Activated CD8-positive, alpha-beta T cell treated with anti-CD3 and anti-CD28 coated beads for 36 hours (primary cell): ENCODE measurements at regions of chr4 and their contacts with region 1.

Region 1: DNA sequence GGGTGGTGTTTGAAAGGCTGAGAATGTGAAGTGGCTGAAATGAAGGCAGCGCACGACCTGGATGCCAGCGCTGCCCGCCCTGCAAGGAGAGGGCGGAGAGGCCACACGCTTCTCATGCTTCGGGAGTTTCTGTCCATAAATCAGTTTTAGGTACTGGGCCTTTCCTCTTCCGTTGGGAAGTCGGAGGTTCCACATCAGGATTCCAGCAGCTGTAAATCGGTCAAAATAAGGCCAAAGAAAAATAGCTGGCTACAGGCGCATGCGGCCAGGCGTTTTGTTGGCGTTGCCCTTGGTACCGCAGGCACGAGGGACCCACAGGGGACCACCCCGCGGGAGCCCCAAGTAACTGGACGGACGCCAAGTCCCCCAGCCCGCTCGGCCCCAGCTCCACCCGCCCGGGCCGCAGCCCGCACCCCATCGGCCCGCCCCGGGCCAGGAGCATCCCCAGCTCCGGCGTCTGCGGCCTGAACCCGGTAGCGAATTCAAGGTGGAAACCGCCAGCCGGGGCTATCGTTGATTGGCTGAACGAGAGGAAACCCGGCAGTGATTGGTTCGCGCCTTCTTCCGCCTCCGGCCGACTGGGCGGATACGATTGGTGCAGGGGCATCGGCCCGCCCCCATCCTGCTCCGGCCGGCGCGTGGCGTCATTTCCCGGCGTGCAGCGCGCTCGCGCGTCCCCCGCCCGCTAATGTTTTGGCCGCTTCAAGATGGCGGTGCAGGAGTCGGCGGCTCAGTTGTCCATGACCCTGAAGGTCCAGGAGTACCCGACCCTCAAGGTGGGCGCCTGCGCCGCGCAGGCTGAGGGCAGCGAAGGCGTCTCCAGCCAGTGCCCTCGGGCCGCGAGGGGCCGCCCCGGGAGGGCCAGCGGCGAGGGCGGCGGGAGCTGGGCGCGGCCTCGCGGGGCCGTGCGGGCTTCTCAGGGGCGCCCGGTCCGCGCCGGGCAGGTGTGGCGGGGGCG is at the start of gene MAEA:
- DNase-seq: peak; percentile 98
- ATAC-seq: peak; percentile 98
- H3K4me3 Mint-ChIP-seq: peak within 1 kb of the TSS; percentile 91
- H3K27ac Mint-ChIP-seq: peak within 1 kb of the TSS; percentile 89
- H3K4me1 Mint-ChIP-seq: peaks cover 29% of the 10 kb centered on the region
- H3K27me3 Mint-ChIP-seq: no peaks in the 10 kb centered on the region
- CTCF ChIP-seq: no peak
- total RNA-seq, gene MAEA: 32.3 to 37.0 TPM

Region 2: GRCh38 chr4:1021386-1022050 is 268.0 kb before region 1 on chr4:
- CTCF ChIA-PET with region 1: no interaction called
- POLR2A ChIA-PET with region 1: no interaction called
- intact Hi-C with region 1: no loop called
- DNase-seq: no peak
- ATAC-seq: no peak
- H3K4me3 Mint-ChIP-seq: no peak overlapping the region
- H3K27ac Mint-ChIP-seq: no peak overlapping the region
- H3K4me1 Mint-ChIP-seq: peaks cover 6% of the 10 kb centered on the region
- H3K27me3 Mint-ChIP-seq: no peaks in the 10 kb centered on the region
- CTCF ChIP-seq: no peak

Region 3: DNA sequence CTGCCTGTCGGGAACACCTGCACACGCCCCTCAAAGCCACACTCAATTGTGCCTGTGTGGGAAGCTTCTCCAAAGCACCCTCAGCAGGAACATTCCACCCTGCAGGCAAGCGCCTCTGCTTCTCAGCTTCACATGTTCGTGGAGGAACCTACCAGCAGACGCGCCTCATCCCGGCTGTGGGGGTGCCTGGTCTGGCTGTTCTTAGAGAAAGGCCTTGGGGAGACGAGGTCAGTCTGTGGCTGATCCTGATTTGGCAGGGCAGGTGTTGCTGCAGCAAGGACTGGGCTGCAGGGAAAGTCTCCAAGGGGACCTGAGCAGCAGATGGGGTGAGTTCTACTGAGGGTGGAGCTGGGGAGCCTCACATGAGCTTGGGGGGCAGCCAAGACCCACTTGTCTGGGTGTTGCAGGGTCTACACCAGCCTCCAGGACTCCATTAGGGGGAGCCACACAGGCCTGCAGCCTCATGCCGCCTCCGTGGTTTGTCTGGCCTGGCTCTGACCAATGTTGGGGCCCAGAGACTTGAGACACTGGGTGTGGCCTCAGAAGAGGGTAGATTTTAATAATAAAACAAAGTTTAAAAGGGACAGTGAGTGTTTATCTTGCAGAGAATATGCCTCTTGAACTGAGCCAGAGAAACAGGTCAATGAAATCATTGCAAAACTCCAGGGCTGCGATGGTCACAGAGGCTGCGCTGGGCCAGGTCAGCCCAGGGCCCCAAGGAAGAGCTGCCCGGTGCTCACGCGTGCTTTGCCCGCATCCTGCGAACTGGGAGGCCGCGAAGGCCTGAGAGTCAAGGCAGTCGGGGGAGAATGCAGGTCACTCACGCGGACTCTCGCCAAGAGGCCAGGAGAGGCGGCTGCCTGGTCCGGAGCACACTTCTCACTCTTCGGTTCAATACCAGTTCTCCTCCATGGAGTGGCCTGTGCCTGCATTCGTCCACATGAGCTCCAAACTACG is 197.2 kb before region 1 on chr4:
- CTCF ChIA-PET with region 1: no interaction called
- POLR2A ChIA-PET with region 1: no interaction called
- intact Hi-C with region 1: no loop called
- DNase-seq: no peak
- ATAC-seq: no peak
- H3K4me3 Mint-ChIP-seq: no peak overlapping the region
- H3K27ac Mint-ChIP-seq: no peak overlapping the region
- H3K4me1 Mint-ChIP-seq: peaks cover 3% of the 10 kb centered on the region
- H3K27me3 Mint-ChIP-seq: peaks cover 2% of the 10 kb centered on the region
- CTCF ChIP-seq: no peak

Region 4: DNA sequence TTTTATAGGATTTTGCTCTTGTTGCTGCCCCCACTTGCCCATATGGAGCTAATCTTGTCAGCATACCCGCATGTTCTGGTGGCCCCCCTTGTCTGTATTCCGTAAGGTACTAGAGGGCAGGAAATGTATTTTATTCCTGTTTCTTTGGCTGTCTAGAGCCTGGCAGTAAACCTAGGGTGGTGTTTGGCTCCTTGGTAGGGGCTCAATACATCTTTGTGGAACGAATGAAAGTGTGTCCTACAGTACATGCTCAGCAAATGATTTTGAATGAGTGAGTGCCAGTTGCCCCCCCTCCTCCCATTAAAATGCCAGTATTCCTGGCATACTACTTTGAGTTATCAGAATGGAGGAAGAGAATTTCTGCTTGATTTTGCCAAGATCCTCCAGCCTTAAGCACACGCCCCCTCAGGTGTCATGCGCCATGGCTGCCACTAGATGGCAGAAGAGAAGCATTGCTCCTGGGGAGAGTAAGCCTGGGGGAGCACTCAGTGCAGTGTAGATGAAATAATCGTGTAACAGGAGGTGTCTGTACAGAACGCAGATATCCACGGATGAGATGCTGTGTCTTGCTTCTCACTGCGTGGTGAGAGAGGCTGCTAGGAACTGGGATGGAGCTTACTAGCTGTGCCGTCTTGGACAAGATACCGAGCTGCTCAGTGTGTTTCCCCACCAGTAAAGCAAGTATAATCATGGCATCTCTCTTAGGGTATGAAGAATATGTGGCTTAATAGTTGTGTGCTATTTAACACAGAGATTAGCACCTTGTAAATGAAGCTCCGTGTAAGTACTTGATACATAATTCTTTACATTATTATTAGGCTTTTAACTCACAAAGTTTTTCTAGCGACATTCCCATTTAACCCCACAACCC is 158.9 kb before region 1 on chr4:
- CTCF ChIA-PET with region 1: interaction called, 39 read pairs
- POLR2A ChIA-PET with region 1: no interaction called
- intact Hi-C with region 1: no loop called
- DNase-seq: peak; percentile 72
- ATAC-seq: peak; percentile 100
- H3K4me3 Mint-ChIP-seq: no peak overlapping the region
- H3K27ac Mint-ChIP-seq: no peak overlapping the region
- H3K4me1 Mint-ChIP-seq: no peaks in the 10 kb centered on the region
- H3K27me3 Mint-ChIP-seq: peaks cover 3% of the 10 kb centered on the region
- CTCF ChIP-seq: peak; percentile 99

Region 5: DNA sequence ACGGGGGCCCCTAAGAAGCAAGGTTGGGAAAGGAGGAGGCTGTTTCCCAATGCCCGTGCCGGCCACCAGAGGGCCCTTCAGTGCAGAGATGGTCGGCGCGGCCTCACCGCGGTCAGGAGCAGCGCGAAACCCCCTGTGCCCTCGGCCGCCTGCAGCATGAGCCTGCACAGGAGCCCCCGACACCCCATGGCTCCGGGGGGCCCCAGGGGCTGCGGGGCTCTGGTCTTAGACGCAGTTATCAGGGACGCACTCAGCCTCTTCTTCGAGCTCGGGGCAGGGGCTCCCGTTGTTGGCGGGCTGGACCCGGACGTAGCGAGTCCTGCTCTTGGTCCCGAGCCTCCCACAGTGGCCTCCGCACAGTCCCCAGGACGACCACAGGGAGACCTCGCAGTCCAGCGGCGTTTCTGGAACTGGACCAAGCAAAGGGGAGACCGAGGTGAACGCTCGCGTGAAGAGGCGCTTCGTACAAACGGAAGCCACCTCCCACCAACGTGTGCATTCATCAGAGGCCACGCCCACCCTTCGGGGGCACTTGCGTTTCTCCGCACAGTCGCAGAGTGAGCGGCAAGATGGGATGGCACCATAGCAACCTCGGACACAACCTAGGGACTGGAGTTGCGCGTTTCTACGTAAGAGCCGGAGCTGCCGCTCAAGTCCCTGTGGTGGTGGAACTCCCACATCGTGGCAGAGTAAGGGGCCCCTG is 122.1 kb before region 1 on chr4:
- CTCF ChIA-PET with region 1: interaction called, 9 read pairs
- POLR2A ChIA-PET with region 1: interaction called, 6 read pairs
- intact Hi-C with region 1: loop called (anchors 5 kb)
- DNase-seq: peak; percentile 97
- ATAC-seq: peak; percentile 92
- H3K4me3 Mint-ChIP-seq: peak overlapping the region; percentile 76
- H3K27ac Mint-ChIP-seq: peak overlapping the region; percentile 83
- H3K4me1 Mint-ChIP-seq: peaks cover 33% of the 10 kb centered on the region
- H3K27me3 Mint-ChIP-seq: peaks cover 13% of the 10 kb centered on the region
- CTCF ChIP-seq: peak; percentile 96

Region 6: GRCh38 chr4:1266881-1267763 is 22.4 kb before region 1 on chr4:
- CTCF ChIA-PET with region 1: interaction called, 57 read pairs
- POLR2A ChIA-PET with region 1: interaction called, 4 read pairs
- intact Hi-C with region 1: no loop called
- DNase-seq: no peak
- ATAC-seq: peak; percentile 82
- H3K4me3 Mint-ChIP-seq: peak overlapping the region; percentile 64
- H3K27ac Mint-ChIP-seq: peak overlapping the region; percentile 93
- H3K4me1 Mint-ChIP-seq: peaks cover 20% of the 10 kb centered on the region
- H3K27me3 Mint-ChIP-seq: no peaks in the 10 kb centered on the region
- CTCF ChIP-seq: no peak

Region 7: DNA sequence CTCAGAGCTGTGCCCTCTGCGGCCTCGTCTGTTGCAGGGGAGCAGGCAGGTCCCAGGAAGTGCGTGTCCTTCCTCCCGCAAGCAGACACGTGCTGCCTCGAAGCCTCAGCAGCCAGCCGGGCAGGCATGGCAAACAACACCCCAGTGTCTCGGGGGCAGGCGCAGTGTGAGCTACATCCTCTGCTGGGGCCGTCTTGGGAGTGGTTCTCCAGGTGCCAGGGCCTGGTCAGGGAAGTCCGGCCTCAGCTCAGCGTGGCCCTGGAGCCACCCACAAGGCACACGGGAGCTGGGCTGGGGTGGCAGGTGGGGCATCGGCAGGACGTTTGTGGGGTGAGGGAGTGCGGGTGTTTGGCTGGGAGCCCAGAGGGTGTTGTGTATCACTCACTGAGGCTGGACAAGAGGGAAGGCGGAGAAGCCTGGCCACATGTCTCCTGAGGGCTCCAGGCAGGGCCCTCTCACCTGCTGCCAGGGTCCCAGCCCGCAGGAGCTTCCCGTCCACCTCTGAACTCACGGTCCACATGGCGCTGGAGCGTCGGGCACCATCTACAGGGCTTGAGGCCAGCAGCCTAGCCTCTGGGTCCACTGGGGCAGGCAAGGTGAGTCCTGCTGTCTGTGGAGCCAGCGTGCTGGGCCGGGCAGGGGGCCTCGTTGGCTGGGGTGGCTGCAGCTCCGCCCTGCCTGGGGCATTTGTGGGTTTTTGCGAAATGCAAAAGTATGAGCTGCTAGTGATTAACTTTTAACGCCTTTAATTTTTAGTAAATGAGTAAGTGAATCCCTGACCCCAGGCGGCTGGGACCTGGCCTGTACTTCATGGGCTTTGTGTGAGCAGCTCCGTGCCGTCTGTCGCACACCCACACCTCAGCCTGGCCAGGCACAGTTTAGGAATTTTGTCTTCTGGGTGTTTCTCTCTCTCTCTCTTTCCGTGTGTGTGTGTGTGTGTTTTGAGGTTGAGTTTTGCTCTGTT is 40.2 kb after region 1 on chr4:
- CTCF ChIA-PET with region 1: no interaction called
- POLR2A ChIA-PET with region 1: interaction called, 11 read pairs
- intact Hi-C with region 1: no loop called
- DNase-seq: peak; percentile 43
- ATAC-seq: peak; percentile 25
- H3K4me3 Mint-ChIP-seq: no peak overlapping the region
- H3K27ac Mint-ChIP-seq: peak overlapping the region; percentile 91
- H3K4me1 Mint-ChIP-seq: peaks cover 33% of the 10 kb centered on the region
- H3K27me3 Mint-ChIP-seq: no peaks in the 10 kb centered on the region
- CTCF ChIP-seq: no peak